H1 (cell line): ENCODE measurements at regions of chr2 and their contacts with region 1.

Region 1: GRCh38 chr2:127453392-127454171 is 35.4 kb downstream of the PROC start:
- DNase-seq: peak in 1 of 2 experiments; percentile 51
- H3K4me3 ChIP-seq: no peak overlapping the region
- H3K27ac ChIP-seq: no peak overlapping the region
- H3K4me1 ChIP-seq: peaks cover 11 to 16% (median 14%) of the 10 kb centered on the region in 4 experiments
- H3K27me3 ChIP-seq: no peaks in the 10 kb centered on the region
- CTCF ChIP-seq: peak; percentile 61 to 66 (median 62)
- EP300 ChIP-seq: no peak
- POLR2A ChIP-seq: no peak
- RAD21 ChIP-seq: peak; percentile 79 to 81

Region 2: GRCh38 chr2:127324635-127325034 is 128.9 kb before region 1 on chr2:
- CTCF ChIA-PET with region 1: interaction called, 60 read pairs
- POLR2A ChIA-PET with region 1: interaction called, 3 read pairs
- DNase-seq: no peak
- H3K4me3 ChIP-seq: no peak overlapping the region
- H3K27ac ChIP-seq: no peak overlapping the region
- H3K4me1 ChIP-seq: no peaks in the 10 kb centered on the region
- H3K27me3 ChIP-seq: no peaks in the 10 kb centered on the region
- CTCF ChIP-seq: peak in 2 of 3 experiments; percentile 34 to 49; a peak in 2 of 4 replicates
- EP300 ChIP-seq: no peak
- POLR2A ChIP-seq: no peak
- RAD21 ChIP-seq: peak; percentile 62 to 64

Region 3: DNA sequence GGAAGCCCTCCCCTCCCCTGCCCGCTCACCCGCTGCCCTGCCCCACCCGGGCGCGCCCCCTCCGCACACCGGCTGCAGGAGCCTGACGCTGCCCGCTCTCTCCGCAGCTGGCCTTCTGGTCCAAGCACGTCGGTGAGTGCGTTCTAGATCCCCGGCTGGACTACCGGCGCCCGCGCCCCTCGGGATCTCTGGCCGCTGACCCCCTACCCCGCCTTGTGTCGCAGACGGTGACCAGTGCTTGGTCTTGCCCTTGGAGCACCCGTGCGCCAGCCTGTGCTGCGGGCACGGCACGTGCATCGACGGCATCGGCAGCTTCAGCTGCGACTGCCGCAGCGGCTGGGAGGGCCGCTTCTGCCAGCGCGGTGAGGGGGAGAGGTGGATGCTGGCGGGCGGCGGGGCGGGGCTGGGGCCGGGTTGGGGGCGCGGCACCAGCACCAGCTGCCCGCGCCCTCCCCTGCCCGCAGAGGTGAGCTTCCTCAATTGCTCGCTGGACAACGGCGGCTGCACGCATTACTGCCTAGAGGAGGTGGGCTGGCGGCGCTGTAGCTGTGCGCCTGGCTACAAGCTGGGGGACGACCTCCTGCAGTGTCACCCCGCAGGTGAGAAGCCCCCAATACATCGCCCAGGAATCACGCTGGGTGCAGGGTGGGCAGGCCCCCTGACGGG is 30.6 kb before region 1 on chr2:
- CTCF ChIA-PET with region 1: interaction called, 59 read pairs
- POLR2A ChIA-PET with region 1: interaction called, 5 read pairs
- DNase-seq: peak in 1 of 2 experiments; percentile 78
- H3K4me3 ChIP-seq: peak overlapping the region; percentile 57 to 85 (median 59)
- H3K27ac ChIP-seq: no peak overlapping the region
- H3K4me1 ChIP-seq: peaks cover 0 to 13% (median 5%) of the 10 kb centered on the region in 4 experiments; a peak in 5 of 7 replicates
- H3K27me3 ChIP-seq: peaks cover 0 to 29% (median 27%) of the 10 kb centered on the region in 4 experiments; a peak in 6 of 7 replicates
- CTCF ChIP-seq: no peak
- EP300 ChIP-seq: no peak
- POLR2A ChIP-seq: peak in 1 of 2 experiments; percentile 45; a peak in 1 of 3 replicates
- RAD21 ChIP-seq: no peak

Region 4: GRCh38 chr2:127431408-127432035 is 22.1 kb before region 1 on chr2:
- CTCF ChIA-PET with region 1: interaction called, 33 read pairs
- POLR2A ChIA-PET with region 1: interaction called, 4 read pairs
- DNase-seq: peak in 1 of 2 experiments; percentile 24
- H3K4me3 ChIP-seq: no peak overlapping the region
- H3K27ac ChIP-seq: no peak overlapping the region
- H3K4me1 ChIP-seq: no peaks in the 10 kb centered on the region
- H3K27me3 ChIP-seq: no peaks in the 10 kb centered on the region
- CTCF ChIP-seq: no peak
- EP300 ChIP-seq: no peak
- POLR2A ChIP-seq: no peak
- RAD21 ChIP-seq: no peak

Region 5: DNA sequence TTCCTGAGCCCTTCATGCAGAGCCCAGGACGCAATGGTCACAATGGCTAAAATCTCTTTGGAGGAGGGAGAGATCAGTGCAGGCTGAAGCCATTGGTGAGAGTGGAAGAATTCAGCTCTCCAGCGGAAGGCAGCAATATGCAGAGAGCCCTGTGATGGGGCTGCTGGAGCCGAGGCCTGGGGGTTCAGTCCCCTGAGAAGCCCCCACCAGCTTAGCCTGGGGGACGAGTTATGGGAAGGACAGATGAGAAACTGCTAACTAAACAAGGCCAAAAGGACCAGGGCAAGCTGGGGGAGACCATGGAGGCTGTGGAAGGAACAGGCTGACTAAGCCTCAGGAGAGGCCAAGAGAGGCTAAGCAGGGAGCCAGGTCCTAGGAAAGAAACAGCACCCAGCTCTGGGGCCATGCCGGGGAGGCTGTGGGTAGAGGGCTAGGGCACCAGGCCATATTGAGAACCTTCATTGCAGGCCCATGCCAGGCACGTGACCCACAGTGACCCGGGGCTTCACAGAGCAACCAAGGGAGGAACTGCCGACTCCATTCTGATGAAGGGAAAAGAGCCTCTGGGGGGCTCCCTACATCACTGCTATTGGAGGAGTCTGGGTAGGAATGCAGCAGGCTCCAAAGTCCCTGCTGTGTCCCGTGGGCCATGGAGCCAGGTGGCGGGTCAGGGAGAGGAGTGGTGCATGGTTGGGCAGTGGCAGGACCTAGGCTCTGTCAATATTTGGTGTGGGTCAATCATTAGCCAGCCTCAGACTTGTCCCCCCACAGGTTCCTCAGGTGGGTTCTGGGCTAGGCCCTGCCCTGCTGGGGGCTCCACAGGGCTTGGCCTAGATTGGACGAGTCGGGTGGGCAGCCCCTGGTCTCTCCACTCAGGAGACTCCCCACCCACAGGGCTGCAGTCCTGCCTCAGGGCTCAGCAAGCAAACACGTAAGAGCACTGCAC is 15.5 kb before region 1 on chr2:
- CTCF ChIA-PET with region 1: interaction called, 33 read pairs
- POLR2A ChIA-PET with region 1: interaction called, 3 read pairs
- DNase-seq: peak in 1 of 2 experiments; percentile 45
- H3K4me3 ChIP-seq: no peak overlapping the region
- H3K27ac ChIP-seq: no peak overlapping the region
- H3K4me1 ChIP-seq: no peaks in the 10 kb centered on the region
- H3K27me3 ChIP-seq: no peaks in the 10 kb centered on the region
- CTCF ChIP-seq: no peak
- EP300 ChIP-seq: no peak
- POLR2A ChIP-seq: no peak
- RAD21 ChIP-seq: peak; percentile 8 to 27; a peak in 1 of 4 replicates

Region 6: GRCh38 chr2:127471286-127471988 is 17.9 kb after region 1 on chr2:
- CTCF ChIA-PET with region 1: interaction called, 34 read pairs
- POLR2A ChIA-PET with region 1: interaction called, 4 read pairs
- DNase-seq: no peak
- H3K4me3 ChIP-seq: no peak overlapping the region
- H3K27ac ChIP-seq: no peak overlapping the region
- H3K4me1 ChIP-seq: no peaks in the 10 kb centered on the region
- H3K27me3 ChIP-seq: no peaks in the 10 kb centered on the region
- CTCF ChIP-seq: no peak
- EP300 ChIP-seq: no peak
- POLR2A ChIP-seq: no peak
- RAD21 ChIP-seq: no peak

Region 7: DNA sequence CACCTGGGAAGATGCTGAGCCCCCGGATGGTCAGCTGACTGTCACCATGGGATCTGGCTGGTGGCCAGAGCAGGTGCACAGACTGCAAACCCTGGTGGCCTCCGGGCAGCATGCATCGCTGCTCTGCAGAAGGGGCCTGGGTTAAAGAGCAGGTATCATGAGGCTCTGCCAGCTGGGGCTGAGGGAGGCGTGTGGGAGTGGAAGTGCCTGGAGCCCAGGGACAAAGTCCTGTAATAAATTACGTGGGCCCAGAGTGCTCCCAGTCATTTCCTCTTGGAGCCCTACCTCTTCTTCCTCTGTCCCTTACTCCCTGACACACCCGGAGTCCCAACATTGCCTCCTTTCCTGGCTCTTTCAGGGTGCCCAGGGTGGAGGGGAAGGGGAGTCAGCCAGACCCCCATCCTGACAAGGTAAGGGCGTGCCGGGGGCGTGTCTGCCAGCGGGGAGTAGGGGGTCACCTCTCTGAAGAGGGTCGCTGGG is 81.9 kb after region 1 on chr2 and contains the start of gene MYO7B:
- CTCF ChIA-PET with region 1: no interaction called
- POLR2A ChIA-PET with region 1: no interaction called
- DNase-seq: no peak
- H3K4me3 ChIP-seq: no peak within 1 kb of the TSS
- H3K27ac ChIP-seq: no peak within 1 kb of the TSS
- H3K4me1 ChIP-seq: no peaks in the 10 kb centered on the region
- H3K27me3 ChIP-seq: no peaks in the 10 kb centered on the region; a peak in 2 of 7 replicates
- CTCF ChIP-seq: no peak
- EP300 ChIP-seq: no peak
- POLR2A ChIP-seq: no peak
- RAD21 ChIP-seq: no peak
- total RNA-seq, gene MYO7B: not detected in 2 replicates

Region 8: GRCh38 chr2:127551221-127551930 is 97.8 kb after region 1 on chr2:
- CTCF ChIA-PET with region 1: no interaction called
- POLR2A ChIA-PET with region 1: no interaction called
- DNase-seq: no peak
- H3K4me3 ChIP-seq: no peak overlapping the region
- H3K27ac ChIP-seq: no peak overlapping the region
- H3K4me1 ChIP-seq: no peaks in the 10 kb centered on the region
- H3K27me3 ChIP-seq: no peaks in the 10 kb centered on the region; a peak in 3 of 7 replicates
- CTCF ChIP-seq: no peak
- EP300 ChIP-seq: no peak
- POLR2A ChIP-seq: no peak
- RAD21 ChIP-seq: no peak